ENCODE measurements at regions of chr21 and their contacts with region 1.

Region 1: GRCh38 chr21:42117229-42117966 is 46.3 kb downstream of the UMODL1 start:
- DNase-seq: peak; percentile 84
- ATAC-seq: peak; percentile 81
- H3K4me3 Mint-ChIP-seq: peak overlapping the region; percentile 38
- H3K27ac Mint-ChIP-seq: no peak overlapping the region
- H3K4me1 Mint-ChIP-seq: peaks cover 41% of the 10 kb centered on the region
- H3K27me3 Mint-ChIP-seq: peaks cover 49% of the 10 kb centered on the region

Region 2: GRCh38 chr21:41612674-41613532 is 504.5 kb before region 1 on chr21:
- CTCF ChIA-PET with region 1: interaction called, 12 read pairs
- POLR2A ChIA-PET with region 1: no interaction called
- DNase-seq: peak; percentile 35
- ATAC-seq: no peak
- H3K4me3 Mint-ChIP-seq: no peak overlapping the region
- H3K27ac Mint-ChIP-seq: no peak overlapping the region
- H3K4me1 Mint-ChIP-seq: no peaks in the 10 kb centered on the region
- H3K27me3 Mint-ChIP-seq: peaks cover 7% of the 10 kb centered on the region

Region 3: GRCh38 chr21:41816220-41817165 is 300.9 kb before region 1 on chr21:
- CTCF ChIA-PET with region 1: interaction called, 58 read pairs
- POLR2A ChIA-PET with region 1: no interaction called
- DNase-seq: peak; percentile 70
- ATAC-seq: peak; percentile 86
- H3K4me3 Mint-ChIP-seq: no peak overlapping the region
- H3K27ac Mint-ChIP-seq: no peak overlapping the region
- H3K4me1 Mint-ChIP-seq: no peaks in the 10 kb centered on the region
- H3K27me3 Mint-ChIP-seq: no peaks in the 10 kb centered on the region

Region 4: GRCh38 chr21:41926117-41926806 is 191.1 kb before region 1 on chr21:
- CTCF ChIA-PET with region 1: interaction called, 13 read pairs
- POLR2A ChIA-PET with region 1: no interaction called
- DNase-seq: peak; percentile 65
- ATAC-seq: peak; percentile 94
- H3K4me3 Mint-ChIP-seq: peak overlapping the region; percentile 86
- H3K27ac Mint-ChIP-seq: peak overlapping the region; percentile 98
- H3K4me1 Mint-ChIP-seq: peaks cover 61% of the 10 kb centered on the region
- H3K27me3 Mint-ChIP-seq: no peaks in the 10 kb centered on the region

Region 5: GRCh38 chr21:42276526-42277154 is 159.2 kb after region 1 on chr21:
- CTCF ChIA-PET with region 1: no interaction called
- POLR2A ChIA-PET with region 1: no interaction called
- DNase-seq: no peak
- ATAC-seq: no peak
- H3K4me3 Mint-ChIP-seq: no peak overlapping the region
- H3K27ac Mint-ChIP-seq: no peak overlapping the region
- H3K4me1 Mint-ChIP-seq: no peaks in the 10 kb centered on the region
- H3K27me3 Mint-ChIP-seq: no peaks in the 10 kb centered on the region